ENCODE measurements at regions of chr6 and their contacts with region 1.

Region 1: GRCh38 chr6:100116411-100117194 is 122.6 kb upstream of the MCHR2 start:
- DNase-seq: peak; percentile 26
- CTCF ChIP-seq: peak; percentile 50

Region 2: DNA sequence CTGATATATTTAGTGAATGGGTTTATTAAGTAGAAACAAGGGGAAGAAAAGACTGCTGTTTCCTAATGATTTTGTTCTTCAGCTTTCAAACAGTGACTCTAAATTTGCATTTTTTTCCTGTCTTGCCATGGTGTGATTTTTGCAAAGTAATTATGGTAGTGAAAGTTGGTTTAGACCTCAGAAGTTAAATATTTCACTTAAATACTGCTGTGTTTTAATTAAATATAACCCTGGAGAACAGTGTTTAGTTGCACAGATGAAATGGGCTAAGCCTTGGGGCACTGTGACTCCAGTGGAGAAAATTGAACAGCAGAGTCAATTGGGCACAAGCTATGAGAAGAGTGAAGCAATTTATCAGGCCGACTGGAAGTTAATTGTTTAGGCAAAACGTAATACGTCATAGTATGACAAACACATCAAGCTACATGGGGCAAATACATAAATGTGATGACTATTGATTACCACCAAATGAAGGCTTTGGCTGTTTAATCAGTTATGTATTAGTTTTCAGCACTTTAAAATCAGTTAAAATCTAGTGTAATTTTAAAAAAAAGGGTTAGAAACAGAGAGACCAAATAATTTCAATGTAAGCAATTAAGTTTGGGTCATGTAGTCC is 11.4 kb before region 1 on chr6:
- CTCF ChIA-PET with region 1: interaction called, 11 read pairs
- POLR2A ChIA-PET with region 1: no interaction called
- DNase-seq: no peak
- CTCF ChIP-seq: no peak

Region 3: GRCh38 chr6:100343316-100344077 is 226.9 kb after region 1 on chr6:
- CTCF ChIA-PET with region 1: no interaction called
- POLR2A ChIA-PET with region 1: no interaction called
- DNase-seq: no peak
- CTCF ChIP-seq: no peak

Region 4: DNA sequence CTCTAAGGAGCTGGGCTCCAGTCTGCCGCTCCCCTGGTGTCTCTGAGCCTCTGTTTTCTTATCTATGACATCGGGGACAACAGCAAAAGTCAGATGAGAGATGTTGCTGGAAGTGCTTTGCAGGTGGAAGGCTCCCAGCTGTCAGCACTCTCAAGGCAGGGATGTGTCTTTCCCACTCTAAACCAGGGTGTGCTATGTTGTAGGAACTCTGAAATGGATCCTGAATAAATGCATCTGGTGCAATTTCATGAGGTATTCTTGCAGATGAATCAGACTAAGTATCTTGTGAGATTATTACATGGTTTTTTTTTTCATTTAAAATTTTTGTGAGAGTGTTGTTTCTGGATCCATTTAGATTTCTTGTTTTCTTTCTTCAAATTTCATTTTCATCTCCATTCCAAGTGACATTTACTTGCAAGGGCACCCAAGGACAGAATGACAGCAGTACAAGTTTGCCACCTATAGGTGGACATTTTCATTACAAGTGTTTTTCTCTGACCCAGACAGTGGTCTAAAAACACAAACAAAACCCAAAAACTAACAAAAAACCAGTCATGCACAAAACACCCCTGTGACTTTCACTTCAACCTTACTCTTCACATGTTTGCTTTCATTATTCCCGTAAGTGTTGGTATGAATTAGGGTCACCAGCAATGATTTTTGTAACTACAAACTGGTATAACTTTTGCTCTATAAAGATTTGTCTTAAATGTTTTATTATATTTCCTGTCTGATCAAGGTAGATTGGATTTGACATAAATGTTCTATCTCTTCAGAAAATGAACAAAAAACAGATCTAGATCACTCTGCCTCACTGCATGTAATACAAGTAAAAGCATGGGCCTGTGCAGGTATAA is 362.8 kb after region 1 on chr6:
- CTCF ChIA-PET with region 1: interaction called, 10 read pairs
- POLR2A ChIA-PET with region 1: no interaction called
- DNase-seq: no peak
- CTCF ChIP-seq: peak; percentile 70

Region 5: GRCh38 chr6:100657678-100658330 is 541.2 kb after region 1 on chr6:
- CTCF ChIA-PET with region 1: interaction called, 13 read pairs
- POLR2A ChIA-PET with region 1: no interaction called
- DNase-seq: no peak
- CTCF ChIP-seq: peak; percentile 23

Region 6: GRCh38 chr6:100664274-100665040 is 547.9 kb after region 1 on chr6:
- CTCF ChIA-PET with region 1: interaction called, 15 read pairs
- POLR2A ChIA-PET with region 1: no interaction called
- DNase-seq: no peak
- CTCF ChIP-seq: peak; percentile 52